Endothelial cell of umbilical vein (primary cell): ENCODE measurements at regions of chr3 and their contacts with region 1.

Region 1: DNA sequence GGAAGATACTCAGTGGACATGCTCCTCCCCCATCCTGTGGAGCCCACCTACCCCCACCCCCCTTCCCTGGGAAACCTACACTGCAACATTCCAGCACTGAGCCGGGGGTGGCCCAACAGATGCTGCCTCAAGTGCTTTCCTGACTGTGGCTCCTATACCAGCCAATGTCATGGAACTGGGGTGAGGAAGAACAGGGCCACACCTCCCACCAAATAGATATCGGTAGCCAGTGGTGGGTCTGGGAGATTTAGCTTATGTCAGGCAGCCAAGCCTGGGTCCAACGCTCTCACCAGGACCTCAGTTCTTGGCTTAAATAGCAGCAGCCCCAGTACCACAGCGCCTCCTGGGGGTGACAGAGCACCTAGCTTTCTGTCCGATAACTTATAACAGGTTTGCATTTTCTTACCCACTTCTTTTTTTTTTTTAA is 30.3 kb downstream of the CDC25A start:
- DNase-seq: peak; percentile 72
- H3K4me3 ChIP-seq: no peak overlapping the region
- H3K27ac ChIP-seq: no peak overlapping the region
- H3K4me1 ChIP-seq: peaks cover 13% of the 10 kb centered on the region
- H3K27me3 ChIP-seq: no peaks in the 10 kb centered on the region
- CTCF ChIP-seq: peak; percentile 72 to 81
- POLR2A ChIP-seq: no peak

Region 2: DNA sequence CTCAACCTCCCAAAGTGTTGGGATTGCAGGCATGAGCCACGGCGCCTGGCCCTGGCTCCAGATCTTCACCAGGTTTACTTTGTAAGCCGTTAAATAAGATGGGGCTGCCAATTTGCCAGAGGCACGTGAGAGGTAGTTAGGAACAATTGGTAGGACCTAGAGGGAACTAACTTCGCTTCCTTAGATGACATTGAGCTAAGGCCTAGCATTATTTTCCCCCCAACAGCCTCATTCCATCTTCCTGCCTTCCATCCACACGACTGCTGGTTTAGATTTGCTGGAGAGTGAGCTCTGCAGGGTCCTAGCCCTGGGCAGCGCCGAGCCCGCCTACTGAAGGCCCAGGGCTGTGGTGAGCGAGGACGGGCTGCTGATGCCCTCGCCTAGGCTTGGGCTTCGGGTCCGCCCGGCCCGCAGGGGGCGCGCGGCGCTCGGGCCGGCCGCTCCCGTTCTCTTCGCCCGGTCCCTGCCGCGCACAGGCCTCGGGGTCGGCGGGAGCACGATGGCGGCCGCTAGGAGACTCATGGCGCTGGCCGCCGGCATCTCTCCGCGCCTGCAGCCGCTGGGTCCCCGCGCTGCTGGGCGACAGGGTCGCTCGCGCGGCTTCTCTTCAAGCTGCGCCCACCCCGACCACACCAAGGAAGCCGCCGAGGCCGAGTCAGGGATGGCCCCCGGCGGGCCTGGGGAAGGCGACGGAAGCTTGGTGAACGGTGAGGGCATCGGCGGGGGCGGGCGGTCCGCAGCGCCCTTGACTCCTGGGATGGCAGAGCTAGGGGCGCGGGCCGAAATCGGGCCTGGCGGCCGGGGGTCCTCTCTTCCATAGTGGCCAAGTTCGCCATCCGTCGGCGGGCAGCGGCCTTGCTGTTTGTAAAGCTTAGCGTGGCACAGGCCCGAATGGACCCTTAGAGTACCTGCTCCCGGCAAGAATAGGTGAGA is 333.2 kb before region 1 on chr3:
- CTCF ChIA-PET with region 1: interaction called, 28 read pairs
- POLR2A ChIA-PET with region 1: no interaction called
- dilution Hi-C with region 1: no loop called
- intact Hi-C with region 1: no loop called
- DNase-seq: peak; percentile 85
- H3K4me3 ChIP-seq: peak overlapping the region; percentile 78 to 97 (median 82)
- H3K27ac ChIP-seq: peak overlapping the region; percentile 68
- H3K4me1 ChIP-seq: peaks cover 19% of the 10 kb centered on the region
- H3K27me3 ChIP-seq: no peaks in the 10 kb centered on the region
- CTCF ChIP-seq: peak; percentile 82 to 96
- POLR2A ChIP-seq: peak; percentile 83

Region 3: DNA sequence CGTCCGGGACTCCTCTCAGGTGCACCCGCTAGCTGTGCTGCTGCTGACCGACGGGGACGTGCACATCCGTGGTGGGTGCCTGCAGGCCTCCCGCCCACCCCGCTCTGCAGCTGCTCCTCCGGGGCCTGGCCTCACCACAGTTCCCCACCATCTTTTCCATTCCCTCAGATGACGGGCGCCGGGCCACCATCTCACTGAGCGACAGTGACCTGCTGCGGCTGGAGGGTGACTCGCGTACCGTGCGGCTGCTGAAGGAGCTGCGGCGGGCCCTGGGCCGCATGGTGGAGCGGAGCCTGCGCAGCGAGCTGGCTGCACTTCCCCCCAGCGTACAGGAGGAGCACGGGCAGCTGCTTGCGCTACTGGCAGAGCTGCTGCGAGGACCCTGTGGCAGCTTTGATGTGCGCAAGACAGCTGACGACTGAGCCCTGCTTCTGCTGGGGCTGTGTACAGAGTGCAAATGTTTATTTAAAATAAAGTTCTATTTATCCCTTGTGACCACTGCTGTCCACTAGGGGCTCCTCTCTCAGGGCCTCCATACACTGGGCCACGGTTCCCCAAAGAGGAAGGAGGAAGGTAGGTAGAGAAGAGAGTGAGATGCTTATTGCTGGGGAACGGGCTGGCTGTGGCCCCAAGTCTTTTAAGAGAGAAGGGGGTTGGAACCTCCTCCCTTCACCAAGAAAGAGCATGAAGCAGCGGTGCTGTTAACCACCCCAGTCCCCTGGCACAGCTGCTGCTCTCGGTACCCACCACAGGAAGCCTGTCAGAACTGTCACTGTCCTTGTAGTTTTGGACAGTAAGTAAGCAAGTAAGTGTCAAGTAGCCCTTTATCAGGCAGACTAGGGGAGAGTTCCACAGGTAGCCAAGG is 308.0 kb before region 1 on chr3:
- CTCF ChIA-PET with region 1: interaction called, 20 read pairs
- POLR2A ChIA-PET with region 1: no interaction called
- dilution Hi-C with region 1: no loop called
- intact Hi-C with region 1: no loop called
- DNase-seq: peak; percentile 31
- H3K4me3 ChIP-seq: no peak overlapping the region
- H3K27ac ChIP-seq: no peak overlapping the region
- H3K4me1 ChIP-seq: no peaks in the 10 kb centered on the region
- H3K27me3 ChIP-seq: no peaks in the 10 kb centered on the region
- CTCF ChIP-seq: peak; percentile 40 to 48
- POLR2A ChIP-seq: no peak

Region 4: GRCh38 chr3:47877290-47877689 is 280.7 kb before region 1 on chr3:
- CTCF ChIA-PET with region 1: interaction called, 14 read pairs
- POLR2A ChIA-PET with region 1: no interaction called
- dilution Hi-C with region 1: no loop called
- intact Hi-C with region 1: no loop called
- DNase-seq: peak; percentile 46
- H3K4me3 ChIP-seq: no peak overlapping the region
- H3K27ac ChIP-seq: peak overlapping the region; percentile 72
- H3K4me1 ChIP-seq: peaks cover 20% of the 10 kb centered on the region
- H3K27me3 ChIP-seq: no peaks in the 10 kb centered on the region
- CTCF ChIP-seq: no peak
- POLR2A ChIP-seq: no peak

Region 5: GRCh38 chr3:48088749-48089466 is 69.1 kb before region 1 on chr3:
- CTCF ChIA-PET with region 1: interaction called, 21 read pairs
- POLR2A ChIA-PET with region 1: no interaction called
- dilution Hi-C with region 1: no loop called
- intact Hi-C with region 1: no loop called
- DNase-seq: peak; percentile 99
- H3K4me3 ChIP-seq: peak overlapping the region; percentile 83 to 94 (median 94)
- H3K27ac ChIP-seq: peak overlapping the region; percentile 70
- H3K4me1 ChIP-seq: peaks cover 18% of the 10 kb centered on the region
- H3K27me3 ChIP-seq: no peaks in the 10 kb centered on the region
- CTCF ChIP-seq: no peak
- POLR2A ChIP-seq: peak; percentile 80

Region 6: DNA sequence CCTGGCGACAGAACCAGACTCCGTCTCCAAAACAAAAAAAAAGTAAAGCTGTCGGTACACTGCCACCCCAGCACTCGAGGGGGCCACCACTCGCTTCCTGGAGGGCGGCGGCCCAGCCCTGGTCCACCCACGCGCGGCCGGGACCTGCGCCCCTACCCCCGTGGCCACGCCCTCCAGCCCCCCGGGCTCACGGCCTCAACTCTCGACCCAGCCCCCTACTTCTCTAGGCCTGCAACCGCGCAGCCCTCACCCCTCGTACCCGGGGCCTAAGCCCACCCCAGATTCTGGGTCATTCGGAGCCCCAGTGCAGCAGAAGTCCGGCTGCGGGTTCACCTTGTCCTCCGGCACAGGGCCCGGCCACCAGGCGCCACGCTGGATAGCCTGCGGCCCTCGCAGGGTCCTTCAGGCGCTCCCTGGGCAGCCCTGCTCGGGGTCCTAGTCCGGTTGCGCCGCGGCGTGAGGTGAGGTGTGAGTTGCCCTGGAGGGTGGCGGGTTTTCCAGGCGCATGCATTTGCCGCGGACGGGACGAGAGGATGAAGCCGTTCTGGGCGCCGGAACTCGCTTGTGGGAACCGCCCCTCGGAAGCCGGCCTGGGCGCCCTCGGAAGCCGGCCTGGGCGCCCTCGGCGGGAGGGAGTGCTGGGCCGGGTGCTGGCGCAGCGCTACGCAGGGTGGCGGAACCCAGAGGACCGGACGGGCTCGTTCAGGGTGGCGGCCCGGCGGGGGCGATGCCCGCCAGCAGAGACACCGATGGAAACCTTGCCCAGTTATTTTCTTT is 143.2 kb after region 1 on chr3:
- CTCF ChIA-PET with region 1: no interaction called
- POLR2A ChIA-PET with region 1: no interaction called
- dilution Hi-C with region 1: no loop called
- intact Hi-C with region 1: no loop called
- DNase-seq: peak; percentile 88
- H3K4me3 ChIP-seq: peak within 1 kb of the TSS; percentile 57 to 86 (median 65)
- H3K27ac ChIP-seq: peak within 1 kb of the TSS; percentile 51
- H3K4me1 ChIP-seq: peaks cover 8% of the 10 kb centered on the region
- H3K27me3 ChIP-seq: peaks cover 2 to 5% of the 10 kb centered on the region in 2 experiments
- CTCF ChIP-seq: no peak
- POLR2A ChIP-seq: no peak

Region 7: GRCh38 chr3:48408823-48409281 is 250.9 kb after region 1 on chr3:
- CTCF ChIA-PET with region 1: no interaction called
- POLR2A ChIA-PET with region 1: no interaction called
- dilution Hi-C with region 1: no loop called
- intact Hi-C with region 1: no loop called
- DNase-seq: no peak
- H3K4me3 ChIP-seq: no peak overlapping the region
- H3K27ac ChIP-seq: no peak overlapping the region
- H3K4me1 ChIP-seq: no peaks in the 10 kb centered on the region
- H3K27me3 ChIP-seq: no peaks in the 10 kb centered on the region
- CTCF ChIP-seq: no peak
- POLR2A ChIP-seq: no peak